CD8-positive, alpha-beta memory T cell (primary cell): ENCODE measurements at regions of chr2 and their contacts with region 1.

Region 1: GRCh38 chr2:219278655-219279516 is at the start of gene DNAJB2:
- DNase-seq: peak; percentile 99 to 100 (median 99)
- H3K4me3 ChIP-seq: peak within 1 kb of the TSS; percentile 72
- H3K4me3 Mint-ChIP-seq: peak within 1 kb of the TSS; percentile 89 to 98 (median 93)
- H3K27ac ChIP-seq: peak within 1 kb of the TSS; percentile 99
- H3K27ac Mint-ChIP-seq: peak within 1 kb of the TSS; percentile 97 to 100 (median 100)
- H3K4me1 ChIP-seq: peaks cover 32% of the 10 kb centered on the region
- H3K4me1 Mint-ChIP-seq: peaks cover 31 to 54% (median 41%) of the 10 kb centered on the region in 3 donors
- H3K27me3 ChIP-seq: no peaks in the 10 kb centered on the region
- H3K27me3 Mint-ChIP-seq: no peaks in the 10 kb centered on the region
- total RNA-seq, gene DNAJB2: 48.5 to 56.4 TPM

Region 2: DNA sequence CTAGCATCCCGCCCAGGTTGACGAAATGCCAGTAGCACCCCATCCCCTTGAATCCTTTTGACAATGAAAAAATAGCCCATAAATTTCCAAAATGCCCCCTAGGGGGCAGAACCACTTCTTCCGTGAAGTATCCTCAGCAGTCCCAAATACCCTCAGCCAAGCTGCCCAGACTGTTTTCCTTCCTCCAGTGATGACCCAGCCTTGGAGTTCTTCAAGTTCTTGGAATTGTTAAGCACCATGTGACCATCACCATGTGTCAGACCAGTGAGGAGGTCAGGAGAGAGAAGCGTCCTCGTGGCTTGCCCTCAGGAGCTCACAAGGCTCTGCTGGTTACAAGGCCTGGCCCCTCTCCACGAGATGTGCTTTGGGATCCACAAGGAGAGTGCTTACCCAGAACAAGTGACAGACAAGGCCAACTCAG is 107.6 kb before region 1 on chr2:
- CTCF ChIA-PET with region 1: interaction called, 13 read pairs
- POLR2A ChIA-PET with region 1: interaction called, 9 read pairs
- DNase-seq: peak in 4 of 5 donors; percentile 12 to 50 (median 42)
- H3K4me3 ChIP-seq: no peak overlapping the region
- H3K4me3 Mint-ChIP-seq: peak overlapping the region in 1 of 7 donors; percentile 65
- H3K27ac ChIP-seq: no peak overlapping the region
- H3K27ac Mint-ChIP-seq: peak overlapping the region in 6 of 8 donors; percentile 43 to 84 (median 72)
- H3K4me1 ChIP-seq: peaks cover 21% of the 10 kb centered on the region
- H3K4me1 Mint-ChIP-seq: peaks cover 30 to 54% (median 45%) of the 10 kb centered on the region in 3 donors
- H3K27me3 ChIP-seq: no peaks in the 10 kb centered on the region
- H3K27me3 Mint-ChIP-seq: peaks cover 0 to 2% of the 10 kb centered on the region in 2 donors

Region 3: GRCh38 chr2:219218732-219219701 is 59.9 kb before region 1 on chr2 and contains the start of gene ABCB6:
- CTCF ChIA-PET with region 1: interaction called, 4 read pairs
- POLR2A ChIA-PET with region 1: interaction called, 13 read pairs
- DNase-seq: peak; percentile 70 to 87 (median 83)
- H3K4me3 ChIP-seq: peak within 1 kb of the TSS; percentile 72
- H3K4me3 Mint-ChIP-seq: peak within 1 kb of the TSS; percentile 66 to 91 (median 83)
- H3K27ac ChIP-seq: peak within 1 kb of the TSS; percentile 68
- H3K27ac Mint-ChIP-seq: peak within 1 kb of the TSS; percentile 36 to 88 (median 79)
- H3K4me1 ChIP-seq: peaks cover 18% of the 10 kb centered on the region
- H3K4me1 Mint-ChIP-seq: peaks cover 18 to 26% (median 18%) of the 10 kb centered on the region in 3 donors
- H3K27me3 ChIP-seq: no peaks in the 10 kb centered on the region
- H3K27me3 Mint-ChIP-seq: peaks cover 0 to 2% of the 10 kb centered on the region in 2 donors
- total RNA-seq, gene ABCB6: 22.1 to 22.8 TPM

Region 4: GRCh38 chr2:219245148-219245898 is 33.6 kb before region 1 on chr2 and contains the starts of genes GLB1L and STK16:
- CTCF ChIA-PET with region 1: interaction called, 136 read pairs
- POLR2A ChIA-PET with region 1: interaction called, 47 read pairs
- DNase-seq: peak; percentile 79 to 93 (median 83)
- H3K4me3 ChIP-seq: peak within 1 kb of the TSS; percentile 86
- H3K4me3 Mint-ChIP-seq: peak within 1 kb of the TSS; percentile 84 to 99 (median 91)
- H3K27ac ChIP-seq: peak within 1 kb of the TSS; percentile 93
- H3K27ac Mint-ChIP-seq: peak within 1 kb of the TSS; percentile 91 to 98 (median 98)
- H3K4me1 ChIP-seq: peaks cover 56% of the 10 kb centered on the region
- H3K4me1 Mint-ChIP-seq: peaks cover 54 to 66% (median 55%) of the 10 kb centered on the region in 3 donors
- H3K27me3 ChIP-seq: no peaks in the 10 kb centered on the region
- H3K27me3 Mint-ChIP-seq: peaks cover 0 to 6% of the 10 kb centered on the region in 2 donors
- total RNA-seq, gene GLB1L: 2.6 to 3.5 TPM
- total RNA-seq, gene STK16: 23.0 to 26.1 TPM

Region 5: GRCh38 chr2:219261024-219261855 is 17.6 kb before region 1 on chr2:
- CTCF ChIA-PET with region 1: interaction called, 136 read pairs
- POLR2A ChIA-PET with region 1: interaction called, 3 read pairs
- DNase-seq: peak in 1 of 5 donors; percentile 22
- H3K4me3 ChIP-seq: no peak overlapping the region
- H3K4me3 Mint-ChIP-seq: no peak overlapping the region
- H3K27ac ChIP-seq: no peak overlapping the region
- H3K27ac Mint-ChIP-seq: no peak overlapping the region
- H3K4me1 ChIP-seq: no peaks in the 10 kb centered on the region
- H3K4me1 Mint-ChIP-seq: no peaks in the 10 kb centered on the region
- H3K27me3 ChIP-seq: no peaks in the 10 kb centered on the region
- H3K27me3 Mint-ChIP-seq: peaks cover 4 to 12% of the 10 kb centered on the region in 2 donors

Region 6: DNA sequence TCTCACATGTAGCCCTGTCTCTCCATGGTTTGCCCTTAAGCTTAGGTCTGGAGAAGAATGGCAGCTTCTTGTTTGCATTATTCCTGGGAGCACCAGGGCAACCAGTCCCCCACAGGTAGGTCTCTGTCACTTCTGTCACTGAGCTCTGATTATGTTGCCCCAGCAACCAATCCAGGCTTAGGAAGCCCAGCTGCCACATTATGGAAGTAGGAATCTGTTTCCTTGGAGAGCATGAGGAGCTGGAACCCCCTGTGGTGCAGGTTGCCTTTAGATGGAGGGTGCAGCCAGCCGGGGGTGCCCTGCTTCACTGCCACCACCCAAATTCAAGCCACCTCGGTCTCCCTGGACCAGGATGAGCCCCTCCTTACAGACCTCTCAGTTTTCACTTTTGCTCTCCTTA is 48.8 kb after region 1 on chr2:
- CTCF ChIA-PET with region 1: no interaction called
- POLR2A ChIA-PET with region 1: no interaction called
- DNase-seq: no peak
- H3K4me3 ChIP-seq: no peak overlapping the region
- H3K4me3 Mint-ChIP-seq: no peak overlapping the region
- H3K27ac ChIP-seq: no peak overlapping the region
- H3K27ac Mint-ChIP-seq: no peak overlapping the region
- H3K4me1 ChIP-seq: no peaks in the 10 kb centered on the region
- H3K4me1 Mint-ChIP-seq: peaks cover 0 to 3% (median 2%) of the 10 kb centered on the region in 3 donors
- H3K27me3 ChIP-seq: peaks cover 21% of the 10 kb centered on the region
- H3K27me3 Mint-ChIP-seq: peaks cover 35 to 79% of the 10 kb centered on the region in 2 donors

Region 7: DNA sequence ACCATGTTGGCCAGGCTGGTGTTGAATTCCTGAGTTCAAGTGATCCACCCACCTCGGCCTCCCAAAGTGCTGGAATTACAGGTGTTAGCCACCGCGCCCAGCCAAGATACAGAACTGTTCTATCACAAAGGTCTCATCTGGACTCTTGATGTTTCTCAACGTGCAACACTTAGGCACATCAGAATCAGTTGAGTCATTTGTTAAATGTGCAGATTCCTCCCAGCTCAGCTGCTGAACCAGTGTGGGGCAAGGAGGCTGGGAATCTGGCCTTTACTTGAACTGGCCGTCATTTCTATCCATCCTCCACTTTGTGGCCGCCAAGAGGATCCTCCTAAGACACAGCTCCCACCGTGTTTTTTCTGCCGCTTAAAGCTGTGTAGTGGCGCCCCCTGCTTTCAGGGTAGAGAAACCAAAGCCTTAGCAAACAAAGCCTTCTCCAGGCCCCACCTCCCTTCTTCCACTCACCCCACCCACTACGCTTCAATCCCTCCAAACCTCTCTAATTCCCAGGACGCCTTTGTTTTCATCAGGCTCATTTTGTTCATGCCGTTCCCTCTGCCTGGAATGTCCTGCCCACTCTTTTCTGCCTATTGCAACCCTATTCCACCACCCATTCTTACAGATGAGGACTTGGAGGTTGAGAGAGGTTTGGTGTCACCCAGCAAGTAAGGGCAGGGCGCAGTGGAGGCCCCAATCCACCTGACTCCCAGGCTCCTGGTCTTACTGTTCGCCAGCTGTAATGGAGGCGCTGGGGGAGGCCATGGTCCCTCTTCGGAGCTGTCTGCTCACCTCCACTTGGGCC is 155.0 kb after region 1 on chr2:
- CTCF ChIA-PET with region 1: no interaction called
- POLR2A ChIA-PET with region 1: no interaction called
- DNase-seq: no peak
- H3K4me3 ChIP-seq: no peak overlapping the region
- H3K4me3 Mint-ChIP-seq: no peak overlapping the region
- H3K27ac ChIP-seq: no peak overlapping the region
- H3K27ac Mint-ChIP-seq: no peak overlapping the region
- H3K4me1 ChIP-seq: no peaks in the 10 kb centered on the region
- H3K4me1 Mint-ChIP-seq: no peaks in the 10 kb centered on the region
- H3K27me3 ChIP-seq: peaks cover 8% of the 10 kb centered on the region
- H3K27me3 Mint-ChIP-seq: peaks cover 16 to 25% of the 10 kb centered on the region in 2 donors